Common myeloid progenitor, CD34-positive (primary cell): ENCODE measurements at regions of chr15 and their contacts with region 1.

Region 1: DNA sequence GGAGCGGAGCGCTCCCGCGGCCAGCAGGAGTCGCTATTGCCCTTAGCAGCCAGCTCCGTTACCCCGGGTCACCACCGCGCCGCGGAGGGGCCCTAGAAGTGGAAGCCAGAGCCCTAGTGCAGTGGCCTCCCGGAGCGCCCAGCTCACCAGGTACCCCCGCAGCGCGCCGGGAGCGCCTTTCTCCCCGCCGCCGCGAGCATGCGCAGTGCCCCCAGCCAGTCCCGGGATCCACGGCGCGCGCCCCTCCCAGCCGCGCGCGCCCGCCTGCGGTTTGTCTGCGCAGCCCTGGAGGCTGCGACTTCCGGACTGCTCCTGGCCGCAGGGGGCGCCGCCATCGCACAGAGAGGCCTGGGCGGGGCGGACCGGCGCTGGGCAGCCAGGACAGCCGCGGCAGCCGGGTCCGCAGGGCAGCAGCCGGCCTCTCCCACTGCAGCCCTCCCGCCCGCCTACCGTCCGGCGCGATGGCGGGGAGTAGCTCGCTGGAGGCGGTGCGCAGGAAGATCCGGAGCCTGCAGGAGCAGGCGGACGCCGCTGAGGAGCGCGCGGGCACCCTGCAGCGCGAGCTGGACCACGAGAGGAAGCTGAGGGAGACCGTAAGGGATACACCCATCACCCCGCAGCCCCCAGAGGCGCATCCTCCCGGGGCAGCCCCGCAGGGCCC is 5.7 kb downstream of the TPM1 start:
- DNase-seq: peak; percentile 90 to 94 (median 94)
- H3K4me3 ChIP-seq: peak overlapping the region; percentile 65 to 94 (median 79)
- H3K27ac ChIP-seq: peak overlapping the region in 1 of 2 experiments; percentile 67
- H3K4me1 ChIP-seq: peaks cover 4 to 46% (median 35%) of the 10 kb centered on the region in 4 experiments
- H3K27me3 ChIP-seq: peaks cover 20 to 42% (median 28%) of the 10 kb centered on the region in 5 experiments

Region 2: GRCh38 chr15:63065262-63066221 is 17.3 kb after region 1 on chr15:
- CTCF ChIA-PET with region 1: interaction called, 50 read pairs
- POLR2A ChIA-PET with region 1: interaction called, 3 read pairs
- DNase-seq: peak in 1 of 3 donors; percentile 29
- H3K4me3 ChIP-seq: no peak overlapping the region
- H3K27ac ChIP-seq: no peak overlapping the region
- H3K4me1 ChIP-seq: peaks cover 2 to 24% (median 17%) of the 10 kb centered on the region in 4 experiments
- H3K27me3 ChIP-seq: no peaks in the 10 kb centered on the region

Region 3: DNA sequence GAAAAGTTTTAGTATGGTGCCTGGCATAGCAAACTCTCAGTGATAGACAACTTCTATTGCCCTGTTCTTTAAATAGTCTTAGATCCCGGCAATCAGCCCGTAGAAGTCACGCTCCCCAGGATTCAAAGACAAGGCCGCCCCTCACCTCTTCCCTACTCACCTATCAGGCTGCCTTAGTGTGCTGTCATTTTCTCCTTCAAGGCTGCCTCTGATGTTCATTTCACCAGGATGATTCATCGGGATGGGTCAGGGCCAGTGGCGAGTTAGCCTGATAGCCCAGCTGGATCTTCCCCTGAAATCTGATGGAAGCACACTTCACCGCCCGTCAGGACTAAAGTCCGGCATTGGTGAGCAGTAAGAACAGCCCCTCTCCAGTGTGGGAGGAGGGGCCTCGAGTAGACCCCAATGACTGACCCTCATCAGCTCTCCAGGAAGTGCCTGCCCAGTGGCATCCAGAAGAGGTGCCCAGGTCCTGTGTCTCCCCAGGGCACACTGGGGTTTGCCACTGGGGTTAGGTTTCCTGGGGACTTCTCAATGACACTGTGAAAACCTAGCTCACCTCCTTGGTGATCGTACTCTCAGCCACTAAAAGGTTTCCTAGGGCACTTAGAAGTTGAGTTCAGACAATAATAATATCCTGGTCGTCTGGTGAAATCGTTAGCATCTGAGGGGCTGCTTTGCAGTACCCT is 31.8 kb after region 1 on chr15:
- CTCF ChIA-PET with region 1: interaction called, 16 read pairs
- POLR2A ChIA-PET with region 1: no interaction called
- DNase-seq: no peak
- H3K4me3 ChIP-seq: no peak overlapping the region
- H3K27ac ChIP-seq: no peak overlapping the region
- H3K4me1 ChIP-seq: peaks cover 0 to 11% (median 6%) of the 10 kb centered on the region in 4 experiments
- H3K27me3 ChIP-seq: no peaks in the 10 kb centered on the region

Region 4: DNA sequence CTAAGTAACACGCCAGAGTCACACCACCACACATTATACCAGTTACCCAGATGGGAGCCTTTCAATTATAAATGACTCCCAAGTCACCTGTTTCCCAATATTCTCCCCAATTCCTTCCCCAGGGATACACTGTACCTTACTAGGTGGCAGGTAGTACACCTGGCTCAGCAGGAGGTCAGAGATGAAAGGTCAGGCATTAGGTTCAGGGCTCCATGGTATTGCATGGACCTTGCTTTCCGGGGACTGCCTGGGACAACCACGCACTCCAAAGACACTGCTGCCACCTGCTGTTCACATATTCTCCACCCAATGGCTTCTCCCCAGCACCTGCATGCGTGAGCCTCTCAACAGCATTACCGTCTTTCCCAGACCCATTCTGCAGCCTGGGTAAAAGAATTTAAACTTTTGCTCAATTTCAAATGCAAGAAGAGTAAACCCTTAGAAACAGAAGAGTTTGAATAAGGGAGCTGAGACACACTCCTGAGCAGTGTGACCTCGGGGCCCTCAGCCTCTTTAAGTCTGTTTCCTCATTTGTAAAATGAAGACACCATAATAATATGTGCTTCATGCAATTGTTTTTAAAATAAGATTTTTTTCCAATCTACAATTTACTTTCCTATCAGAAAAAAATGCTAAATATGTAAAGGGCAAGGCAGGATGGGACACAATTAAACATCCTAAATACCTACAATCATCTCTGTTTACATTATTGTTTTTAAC is 45.4 kb after region 1 on chr15:
- CTCF ChIA-PET with region 1: interaction called, 213 read pairs
- POLR2A ChIA-PET with region 1: interaction called, 4 read pairs
- DNase-seq: peak; percentile 71 to 81 (median 77)
- H3K4me3 ChIP-seq: no peak overlapping the region
- H3K27ac ChIP-seq: no peak overlapping the region
- H3K4me1 ChIP-seq: peaks cover 0 to 23% (median 10%) of the 10 kb centered on the region in 4 experiments
- H3K27me3 ChIP-seq: no peaks in the 10 kb centered on the region

Region 5: GRCh38 chr15:63146669-63147068 is 98.4 kb after region 1 on chr15:
- CTCF ChIA-PET with region 1: no interaction called
- POLR2A ChIA-PET with region 1: no interaction called
- DNase-seq: peak in 2 of 3 donors; percentile 32 to 39
- H3K4me3 ChIP-seq: no peak overlapping the region
- H3K27ac ChIP-seq: no peak overlapping the region
- H3K4me1 ChIP-seq: peaks cover 0 to 7% (median 3%) of the 10 kb centered on the region in 4 experiments
- H3K27me3 ChIP-seq: no peaks in the 10 kb centered on the region